ENCODE measurements at regions of chr1 and their contacts with region 1.

Region 1: GRCh38 chr1:113982033-113982931 is 3.0 kb downstream of the OLFML3 start:
- DNase-seq: no peak
- H3K4me3 ChIP-seq: peak overlapping the region in 3 of 8 donors; percentile 5 to 20 (median 10)
- H3K27ac ChIP-seq: peak overlapping the region in 5 of 8 donors; percentile 1 to 48 (median 24)
- H3K4me1 ChIP-seq: peaks cover 0 to 46% (median 18%) of the 10 kb centered on the region in 6 donors
- H3K27me3 ChIP-seq: no peaks in the 10 kb centered on the region
- CTCF ChIP-seq: no peak
- POLR2A ChIP-seq: no peak

Region 2: DNA sequence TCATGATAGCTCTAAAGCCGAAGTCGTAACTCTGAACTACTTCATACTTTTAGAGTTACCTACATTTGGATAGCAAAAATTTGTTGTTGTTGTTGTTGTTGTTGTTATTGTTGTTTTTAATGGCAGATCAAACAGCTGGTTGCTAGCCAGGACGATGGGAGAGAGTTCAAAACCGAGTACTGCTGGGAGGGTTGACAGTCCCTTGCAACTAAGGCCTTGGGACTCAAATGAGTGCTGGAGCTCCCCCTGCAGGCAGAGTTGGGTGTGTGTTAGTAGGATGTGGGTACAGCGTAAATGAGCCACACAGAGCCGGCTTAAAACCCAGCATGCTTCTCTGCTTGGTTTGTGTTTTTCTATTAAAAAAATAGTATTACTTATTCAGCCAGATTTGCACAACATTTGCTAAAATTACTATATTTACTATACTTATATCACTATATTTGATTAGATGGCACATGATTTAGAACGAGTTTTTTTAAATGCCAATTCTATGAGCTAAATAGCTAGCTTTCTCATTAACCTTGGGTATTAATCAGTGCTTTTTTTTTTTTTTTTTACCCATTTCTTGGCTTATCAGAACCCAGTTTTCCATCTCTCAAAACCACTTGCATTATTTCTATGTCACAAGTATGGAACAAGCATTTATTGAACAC is 300.6 kb after region 1 on chr1:
- intact Hi-C with region 1: loop called (anchors 5 kb)
- DNase-seq: peak; percentile 92
- H3K4me3 ChIP-seq: no peak overlapping the region
- H3K27ac ChIP-seq: no peak overlapping the region
- H3K4me1 ChIP-seq: peaks cover 0 to 9% (median 2%) of the 10 kb centered on the region in 6 donors
- H3K27me3 ChIP-seq: no peaks in the 10 kb centered on the region
- CTCF ChIP-seq: peak; percentile 59 to 90 (median 83)
- POLR2A ChIP-seq: no peak

Region 3: DNA sequence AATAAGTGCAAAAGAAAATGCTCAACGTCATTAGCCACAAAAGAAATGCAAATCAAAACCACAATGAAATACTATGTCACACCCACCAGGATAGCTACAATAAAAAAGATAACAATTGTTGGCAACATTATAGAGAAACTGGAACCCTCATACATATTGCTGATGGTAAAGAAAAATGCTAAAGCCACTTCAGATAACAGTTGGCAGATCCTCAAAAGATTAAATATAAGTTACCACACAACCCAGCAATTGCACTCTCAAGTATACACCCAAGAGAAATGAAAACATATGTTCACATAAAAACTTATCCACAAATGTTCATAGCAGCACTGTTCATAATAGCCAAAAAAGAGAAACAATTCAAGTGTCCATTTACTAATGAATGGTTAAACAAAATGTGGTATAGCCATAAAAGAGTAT is 508.0 kb after region 1 on chr1:
- intact Hi-C with region 1: no loop called
- DNase-seq: no peak
- H3K4me3 ChIP-seq: no peak overlapping the region
- H3K27ac ChIP-seq: no peak overlapping the region
- H3K4me1 ChIP-seq: peaks cover 3 to 44% (median 20%) of the 10 kb centered on the region in 6 donors
- H3K27me3 ChIP-seq: no peaks in the 10 kb centered on the region
- CTCF ChIP-seq: no peak
- POLR2A ChIP-seq: no peak

Measured in spleen (tissue), 13 donors.